IMR-90 (cell line): ENCODE measurements at regions of chr5 and their contacts with region 1.

Region 1: DNA sequence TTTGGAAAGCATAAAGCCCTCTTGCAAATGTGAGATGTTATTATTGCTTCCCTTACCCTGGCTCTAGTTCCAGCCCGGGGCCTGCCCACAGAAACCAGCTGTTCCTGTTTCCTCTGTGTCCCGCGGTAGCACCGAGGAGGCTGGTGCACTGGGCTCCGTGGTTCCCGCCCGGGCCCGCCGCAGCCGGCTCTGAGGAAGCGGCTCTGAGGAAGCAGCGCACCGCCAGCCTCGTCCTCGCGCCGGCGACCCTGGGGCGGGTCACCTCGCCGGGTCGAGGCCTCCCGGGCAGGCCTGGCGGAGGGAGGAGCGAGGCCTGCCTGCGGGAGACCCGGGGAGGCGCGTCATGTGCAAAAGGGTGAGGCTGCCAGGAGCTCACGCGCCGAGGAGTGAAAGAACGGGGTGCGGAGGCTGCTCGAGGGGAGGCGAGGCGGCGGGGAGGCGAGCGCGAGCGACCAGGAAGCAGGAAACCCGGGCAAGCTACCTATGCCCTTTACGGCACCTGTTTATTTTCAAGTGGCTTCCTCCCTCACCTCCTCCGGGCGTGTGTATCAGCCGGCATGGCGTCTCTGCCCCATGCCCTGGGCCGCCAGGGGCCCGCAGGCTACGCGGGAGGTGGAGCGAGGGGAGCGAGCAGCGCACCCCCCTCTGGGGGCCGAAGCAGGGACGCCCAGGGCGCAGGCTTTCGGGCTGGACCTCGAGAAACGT is 61.3 kb upstream of the MEGF10 start:
- DNase-seq: peak; percentile 6
- ATAC-seq: peak; percentile 92
- H3K4me3 ChIP-seq: peak overlapping the region; percentile 47
- H3K27ac ChIP-seq: no peak overlapping the region
- H3K4me1 ChIP-seq: no peaks in the 10 kb centered on the region
- H3K27me3 ChIP-seq: peaks cover 19% of the 10 kb centered on the region
- CTCF ChIP-seq: peak; percentile 10; the same call in 1 of the 2 replicates
- POLR2A ChIP-seq: no peak
- RAD21 ChIP-seq: no peak

Region 2: DNA sequence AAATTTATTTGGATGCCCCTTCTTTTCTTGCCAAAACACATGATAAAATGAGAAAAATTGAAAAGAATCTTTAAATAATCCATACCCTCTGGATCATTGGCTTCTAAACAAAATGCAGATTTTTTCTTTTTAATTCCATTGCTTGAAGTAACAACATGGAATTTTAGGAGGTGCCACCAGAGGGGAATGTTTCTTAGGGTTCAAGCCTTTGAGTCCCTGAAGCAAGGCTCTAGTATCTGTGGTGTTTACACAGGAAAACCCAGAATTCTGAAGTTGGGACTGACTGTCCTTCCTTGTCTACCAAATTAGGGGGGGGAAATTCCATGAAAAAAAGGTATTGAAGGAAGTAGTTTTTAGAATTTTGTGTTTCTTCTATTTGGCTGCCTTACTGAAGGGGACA is 383.0 kb before region 1 on chr5:
- CTCF ChIA-PET with region 1: no interaction called
- POLR2A ChIA-PET with region 1: no interaction called
- dilution Hi-C with region 1: no loop called
- in situ Hi-C with region 1: no loop called
- intact Hi-C with region 1: loop called (anchors 5 kb)
- DNase-seq: peak; percentile 38
- ATAC-seq: peak; percentile 44; the same call in 1 of the 2 replicates
- H3K4me3 ChIP-seq: no peak overlapping the region
- H3K27ac ChIP-seq: no peak overlapping the region
- H3K4me1 ChIP-seq: no peaks in the 10 kb centered on the region; the same call in 1 of the 2 replicates
- H3K27me3 ChIP-seq: no peaks in the 10 kb centered on the region
- CTCF ChIP-seq: peak; percentile 42
- POLR2A ChIP-seq: no peak
- RAD21 ChIP-seq: peak; percentile 56

Region 3: GRCh38 chr5:127053049-127053448 is 176.3 kb before region 1 on chr5:
- CTCF ChIA-PET with region 1: no interaction called
- POLR2A ChIA-PET with region 1: no interaction called
- dilution Hi-C with region 1: no loop called
- in situ Hi-C with region 1: no loop called
- intact Hi-C with region 1: no loop called
- DNase-seq: no peak
- ATAC-seq: no peak
- H3K4me3 ChIP-seq: no peak overlapping the region
- H3K27ac ChIP-seq: no peak overlapping the region
- H3K4me1 ChIP-seq: no peaks in the 10 kb centered on the region
- H3K27me3 ChIP-seq: no peaks in the 10 kb centered on the region
- CTCF ChIP-seq: no peak
- POLR2A ChIP-seq: no peak
- RAD21 ChIP-seq: no peak